ENCODE measurements at regions of chrX and their contacts with region 1.

Region 1: GRCh38 chrX:150486011-150486410 is 82.4 kb upstream of the MTM1 start:
- DNase-seq: peak; percentile 44
- H3K4me3 ChIP-seq: no peak overlapping the region
- H3K27ac ChIP-seq: no peak overlapping the region
- H3K4me1 ChIP-seq: no peaks in the 10 kb centered on the region
- H3K27me3 ChIP-seq: no peaks in the 10 kb centered on the region
- CTCF ChIP-seq: peak; percentile 59 to 70
- POLR2A ChIP-seq: no peak

Region 2: DNA sequence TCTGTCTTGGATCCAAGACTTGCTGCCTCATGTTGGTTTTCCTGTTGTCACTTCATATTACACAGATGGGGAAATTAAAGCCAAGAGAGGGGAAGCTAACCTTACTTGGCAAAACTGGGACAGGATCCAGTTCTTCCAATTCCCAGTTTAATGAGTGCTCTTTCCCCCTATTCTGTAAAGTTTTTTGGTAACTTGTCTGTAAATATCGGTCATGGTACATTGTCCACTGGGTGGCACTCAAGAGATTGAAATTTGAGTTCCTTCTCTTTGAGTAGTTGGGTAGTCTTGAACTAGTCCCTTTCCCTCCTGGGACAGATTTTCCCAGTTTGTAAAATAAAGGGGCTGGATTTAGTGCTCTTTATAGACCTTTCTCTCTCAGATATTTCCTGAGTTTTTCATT is 535.3 kb before region 1 on chrX:
- CTCF ChIA-PET with region 1: interaction called, 6 read pairs
- POLR2A ChIA-PET with region 1: no interaction called
- dilution Hi-C with region 1: no loop called
- intact Hi-C with region 1: loop called (anchors 1 kb)
- DNase-seq: peak; percentile 62
- H3K4me3 ChIP-seq: no peak overlapping the region
- H3K27ac ChIP-seq: no peak overlapping the region
- H3K4me1 ChIP-seq: no peaks in the 10 kb centered on the region
- H3K27me3 ChIP-seq: no peaks in the 10 kb centered on the region
- CTCF ChIP-seq: peak; percentile 22 to 25
- POLR2A ChIP-seq: no peak

Region 3: DNA sequence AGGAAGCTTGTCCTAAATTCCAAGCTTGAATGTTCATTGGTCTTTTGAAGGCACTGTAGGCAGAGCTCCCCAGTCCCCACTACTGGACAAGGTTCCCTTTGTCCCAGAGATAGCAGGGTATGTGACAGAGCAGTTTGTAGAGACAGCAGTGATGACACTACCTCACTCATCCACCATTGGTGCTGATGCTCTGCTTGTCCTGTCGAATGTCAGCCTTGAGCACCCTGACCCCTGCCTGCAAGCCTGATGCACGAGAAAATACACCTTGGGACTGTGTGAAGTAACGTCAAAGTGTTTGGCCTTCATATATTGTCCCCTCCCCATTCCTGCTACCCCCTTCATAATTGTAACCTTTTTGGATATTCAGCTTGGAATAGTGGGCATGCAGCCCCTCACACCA is 358.8 kb before region 1 on chrX:
- CTCF ChIA-PET with region 1: no interaction called
- POLR2A ChIA-PET with region 1: no interaction called
- dilution Hi-C with region 1: no loop called
- intact Hi-C with region 1: no loop called
- DNase-seq: no peak
- H3K4me3 ChIP-seq: no peak overlapping the region
- H3K27ac ChIP-seq: no peak overlapping the region
- H3K4me1 ChIP-seq: no peaks in the 10 kb centered on the region
- H3K27me3 ChIP-seq: no peaks in the 10 kb centered on the region
- CTCF ChIP-seq: no peak
- POLR2A ChIP-seq: no peak

Region 4: GRCh38 chrX:150449313-150449712 is 36.7 kb before region 1 on chrX:
- CTCF ChIA-PET with region 1: no interaction called
- POLR2A ChIA-PET with region 1: no interaction called
- dilution Hi-C with region 1: no loop called
- intact Hi-C with region 1: loop called (anchors 5 kb)
- DNase-seq: no peak
- H3K4me3 ChIP-seq: no peak overlapping the region
- H3K27ac ChIP-seq: no peak overlapping the region
- H3K4me1 ChIP-seq: peaks cover 13% of the 10 kb centered on the region
- H3K27me3 ChIP-seq: no peaks in the 10 kb centered on the region
- CTCF ChIP-seq: no peak
- POLR2A ChIP-seq: no peak

Region 5: GRCh38 chrX:150587585-150588503 is 101.8 kb after region 1 on chrX:
- CTCF ChIA-PET with region 1: interaction called, 4 read pairs
- POLR2A ChIA-PET with region 1: no interaction called
- dilution Hi-C with region 1: no loop called
- intact Hi-C with region 1: loop called (anchors 2 kb)
- DNase-seq: peak; percentile 35
- H3K4me3 ChIP-seq: no peak overlapping the region
- H3K27ac ChIP-seq: no peak overlapping the region
- H3K4me1 ChIP-seq: no peaks in the 10 kb centered on the region
- H3K27me3 ChIP-seq: no peaks in the 10 kb centered on the region
- CTCF ChIP-seq: peak; percentile 40 to 51
- POLR2A ChIP-seq: no peak